ENCODE measurements at regions of chr10 and their contacts with region 1.

Region 1: DNA sequence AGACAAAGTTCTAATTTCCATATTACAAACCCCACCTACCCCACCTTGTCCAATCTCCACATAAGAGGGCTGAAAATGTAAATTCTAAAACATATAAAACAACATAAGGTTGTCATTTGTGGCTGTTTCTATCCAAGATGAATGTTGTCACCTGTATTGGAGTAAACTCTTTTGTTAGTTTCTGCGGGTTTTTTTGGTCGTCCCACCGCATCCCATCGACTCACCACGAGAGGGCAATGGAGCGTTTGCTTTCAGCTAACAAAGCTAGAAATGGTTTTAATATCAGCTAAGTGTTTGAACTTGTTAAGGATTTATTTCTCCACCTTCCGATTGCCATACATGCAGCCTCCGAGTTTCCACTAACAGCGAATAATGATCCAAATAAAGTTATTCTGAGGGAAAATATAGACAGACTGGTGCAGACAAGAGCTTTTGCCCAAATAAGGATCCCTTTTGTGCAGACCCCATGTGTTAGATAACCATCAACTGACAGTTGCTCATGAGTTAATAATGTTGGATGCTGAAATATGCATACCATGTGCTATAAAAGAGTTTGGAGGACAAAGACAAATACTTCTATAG is 137.2 kb downstream of the ARID5B start:
- DNase-seq: peak; percentile 94
- H3K4me3 Mint-ChIP-seq: peak overlapping the region; percentile 67
- H3K27ac Mint-ChIP-seq: peak overlapping the region; percentile 76
- H3K4me1 Mint-ChIP-seq: peaks cover 73% of the 10 kb centered on the region
- H3K27me3 Mint-ChIP-seq: no peaks in the 10 kb centered on the region

Region 2: GRCh38 chr10:62000037-62000603 is 38.6 kb before region 1 on chr10:
- intact Hi-C with region 1: no loop called
- DNase-seq: no peak
- H3K4me3 Mint-ChIP-seq: no peak overlapping the region
- H3K27ac Mint-ChIP-seq: peak overlapping the region; percentile 65
- H3K4me1 Mint-ChIP-seq: peaks cover 61% of the 10 kb centered on the region
- H3K27me3 Mint-ChIP-seq: no peaks in the 10 kb centered on the region

Region 3: DNA sequence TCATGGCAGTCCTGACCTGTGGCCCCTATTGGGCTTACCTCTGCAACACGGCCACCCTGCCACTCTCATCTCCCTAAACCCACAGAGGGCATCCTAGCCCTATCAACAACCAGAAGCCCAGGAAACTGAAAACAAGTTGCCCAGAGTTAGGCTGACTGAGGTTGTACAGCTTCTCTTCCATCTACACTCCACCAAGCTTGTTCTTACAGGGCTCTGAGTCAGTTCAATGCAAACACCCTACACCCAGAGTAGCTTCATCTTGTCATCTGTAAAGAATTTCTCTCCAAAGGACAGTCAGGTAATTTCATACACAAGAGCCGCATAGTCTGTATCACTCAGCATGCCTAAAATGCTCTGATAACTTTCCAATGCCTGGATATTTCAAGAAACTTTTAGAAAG is 38.2 kb after region 1 on chr10:
- intact Hi-C with region 1: loop called (anchors 5 kb)
- DNase-seq: peak; percentile 68
- H3K4me3 Mint-ChIP-seq: peak overlapping the region; percentile 2
- H3K27ac Mint-ChIP-seq: peak overlapping the region; percentile 61
- H3K4me1 Mint-ChIP-seq: peaks cover 72% of the 10 kb centered on the region
- H3K27me3 Mint-ChIP-seq: no peaks in the 10 kb centered on the region

Measured in activated CD4-positive, alpha-beta T cell treated with anti-CD3 and anti-CD28 coated beads, Interleukin-2, amount 10 ng/mL, durations not matched to agents 24 days and 14 days (primary cell).